Activated CD8-positive, alpha-beta T cell treated with anti-CD3 and anti-CD28 coated beads for 36 hours (primary cell): ENCODE measurements at regions of chr13 and their contacts with region 1.

Region 1: DNA sequence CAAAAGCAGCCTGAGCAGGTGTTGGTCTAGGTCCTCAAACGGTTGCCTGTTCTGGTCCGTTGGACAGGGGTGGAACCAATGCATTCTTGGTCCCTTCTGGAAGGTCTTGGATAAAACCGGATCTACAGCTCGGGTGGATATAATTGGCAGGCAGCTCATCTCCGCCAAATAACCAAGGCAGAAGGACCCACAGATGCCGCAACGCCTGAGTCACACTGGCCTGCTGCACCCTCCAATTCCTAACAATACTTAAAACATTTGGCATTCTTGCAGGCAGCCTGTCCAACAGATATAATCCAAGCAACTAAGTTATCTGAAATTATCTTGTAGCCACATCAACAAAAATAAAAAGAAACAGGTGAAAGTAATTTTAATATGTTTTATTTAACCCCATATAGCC is 59.0 kb upstream of the FGF14 start:
- DNase-seq: no peak
- ATAC-seq: no peak
- H3K4me3 Mint-ChIP-seq: no peak overlapping the region
- H3K27ac Mint-ChIP-seq: no peak overlapping the region
- H3K4me1 Mint-ChIP-seq: peaks cover 7% of the 10 kb centered on the region
- H3K27me3 Mint-ChIP-seq: peaks cover 8% of the 10 kb centered on the region
- CTCF ChIP-seq: no peak

Region 2: GRCh38 chr13:102141625-102142472 is 319.0 kb before region 1 on chr13:
- CTCF ChIA-PET with region 1: interaction called, 9 read pairs
- POLR2A ChIA-PET with region 1: no interaction called
- intact Hi-C with region 1: loop called (anchors 5 kb)
- DNase-seq: no peak
- ATAC-seq: no peak
- H3K4me3 Mint-ChIP-seq: no peak overlapping the region
- H3K27ac Mint-ChIP-seq: no peak overlapping the region
- H3K4me1 Mint-ChIP-seq: no peaks in the 10 kb centered on the region
- H3K27me3 Mint-ChIP-seq: no peaks in the 10 kb centered on the region
- CTCF ChIP-seq: peak; percentile 71

Region 3: DNA sequence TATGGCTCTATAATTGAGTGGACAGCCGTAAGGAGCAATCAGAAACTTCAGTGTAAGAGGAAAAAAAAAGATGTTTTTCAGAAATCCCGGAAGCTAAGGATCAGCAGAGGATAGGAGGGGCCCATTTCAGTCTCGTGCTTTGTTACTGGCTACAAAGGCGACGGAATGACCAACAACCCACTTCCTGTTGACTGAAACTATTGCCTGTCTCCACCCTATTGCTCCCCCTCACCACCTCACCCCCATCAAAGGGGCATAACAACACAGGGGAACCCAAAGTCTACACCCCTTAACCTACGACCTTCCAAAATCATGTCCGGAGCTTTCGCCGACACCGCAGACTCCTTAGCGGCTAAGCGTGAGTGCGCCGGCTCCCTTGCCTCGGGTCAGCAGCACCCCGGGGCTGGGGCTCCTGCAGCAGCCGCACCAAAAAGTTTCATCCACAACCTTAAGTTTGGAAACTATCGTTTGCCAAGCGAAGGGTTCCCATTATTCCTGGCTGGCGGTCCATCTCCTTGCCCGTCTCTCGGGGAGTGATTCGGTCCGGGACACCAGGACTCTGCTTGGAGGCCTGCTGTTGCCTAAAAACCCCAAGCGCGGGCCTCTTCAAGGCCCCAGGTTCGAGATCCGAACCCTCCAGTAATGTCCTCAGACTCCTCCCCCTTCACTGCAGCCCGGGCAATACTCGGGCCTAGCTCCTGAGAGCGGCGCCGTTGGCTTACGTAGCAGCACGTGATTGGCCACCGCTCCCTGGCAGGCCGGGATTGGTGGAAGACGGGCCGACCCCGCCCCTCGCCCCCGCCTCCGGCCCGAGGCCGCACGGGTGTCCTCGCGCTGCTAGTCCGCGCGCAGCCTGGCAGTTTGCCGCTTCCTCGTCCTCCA is 135.6 kb after region 1 on chr13 and contains the start of gene TPP2:
- CTCF ChIA-PET with region 1: no interaction called
- POLR2A ChIA-PET with region 1: no interaction called
- intact Hi-C with region 1: no loop called
- DNase-seq: peak; percentile 99
- ATAC-seq: peak; percentile 90
- H3K4me3 Mint-ChIP-seq: peak within 1 kb of the TSS; percentile 99
- H3K27ac Mint-ChIP-seq: peak within 1 kb of the TSS; percentile 100
- H3K4me1 Mint-ChIP-seq: peaks cover 57% of the 10 kb centered on the region
- H3K27me3 Mint-ChIP-seq: no peaks in the 10 kb centered on the region
- CTCF ChIP-seq: no peak
- total RNA-seq, gene TPP2: 70.3 to 70.8 TPM